ENCODE measurements at regions of chr17 and their contacts with region 1.

Region 1: GRCh38 chr17:63611354-63611753 is 10.7 kb downstream of the TACO1 start:
- DNase-seq: no peak
- H3K4me3 ChIP-seq: no peak overlapping the region
- H3K27ac ChIP-seq: peak overlapping the region; percentile 6 to 11; a peak in 2 of 4 replicates
- H3K4me1 ChIP-seq: no peaks in the 10 kb centered on the region
- H3K27me3 ChIP-seq: no peaks in the 10 kb centered on the region
- CTCF ChIP-seq: no peak
- EP300 ChIP-seq: no peak
- RAD21 ChIP-seq: no peak

Region 2: DNA sequence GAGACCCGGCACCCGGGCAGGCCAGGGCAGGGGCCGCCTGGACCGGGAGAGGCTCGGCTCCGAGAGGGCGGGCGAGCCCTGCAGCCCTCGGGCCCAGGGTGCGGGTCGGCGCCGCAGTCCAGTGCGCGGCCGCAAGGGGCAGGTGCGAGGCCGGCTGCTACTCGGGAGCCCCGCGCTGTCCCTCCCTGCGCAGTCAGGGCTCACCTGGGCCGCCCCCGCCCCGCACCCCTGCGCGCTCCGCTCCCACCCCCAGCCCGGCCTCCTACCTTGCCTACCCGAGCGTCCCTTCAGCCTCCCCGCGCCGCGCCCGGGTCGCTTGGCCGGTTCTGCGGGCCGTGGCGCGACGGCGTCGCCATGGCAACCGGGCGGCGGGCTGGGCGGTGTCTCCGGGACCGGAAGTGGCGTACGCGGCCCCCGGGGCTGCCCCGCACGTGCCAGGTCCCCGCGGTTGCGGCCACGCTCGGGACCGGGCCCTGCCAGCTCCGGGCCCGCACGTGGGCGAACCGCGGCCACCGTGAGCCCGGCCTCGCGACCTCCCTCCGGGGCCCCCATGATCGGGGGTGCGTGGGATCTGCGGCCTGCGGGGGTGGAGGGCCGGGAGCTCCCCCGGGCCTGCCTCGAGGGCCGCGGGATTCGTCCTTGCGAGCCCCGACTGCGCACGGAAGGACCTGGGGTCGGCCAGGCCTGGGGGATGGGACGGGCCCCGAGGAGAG is 165.2 kb before region 1 on chr17 and contains the start of gene CYB561:
- CTCF ChIA-PET with region 1: interaction called, 827 read pairs
- POLR2A ChIA-PET with region 1: interaction called, 13 read pairs
- DNase-seq: peak; percentile 97
- H3K4me3 ChIP-seq: peak within 1 kb of the TSS; percentile 56 to 64
- H3K27ac ChIP-seq: peak within 1 kb of the TSS; percentile 19 to 99; a peak in 2 of 4 replicates
- H3K4me1 ChIP-seq: peaks cover 8 to 69% of the 10 kb centered on the region in 2 experiments
- H3K27me3 ChIP-seq: no peaks in the 10 kb centered on the region
- CTCF ChIP-seq: peak; percentile 54
- EP300 ChIP-seq: no peak
- RAD21 ChIP-seq: peak; percentile 32
- polyA plus RNA-seq, gene CYB561: 28.3 and 38.6 TPM in 2 replicates

Region 3: GRCh38 chr17:63529711-63530556 is 81.4 kb before region 1 on chr17:
- CTCF ChIA-PET with region 1: interaction called, 29 read pairs
- POLR2A ChIA-PET with region 1: no interaction called
- DNase-seq: peak; percentile 74
- H3K4me3 ChIP-seq: no peak overlapping the region
- H3K27ac ChIP-seq: peak overlapping the region in 1 of 2 experiments; percentile 32; a peak in 1 of 4 replicates
- H3K4me1 ChIP-seq: peaks cover 0 to 29% of the 10 kb centered on the region in 2 experiments; a peak in 1 of 4 replicates
- H3K27me3 ChIP-seq: 0 out of 2 replicates have a peak, but pooled peaks cover 17% of the 10 kb centered on the region
- CTCF ChIP-seq: no peak
- EP300 ChIP-seq: no peak
- RAD21 ChIP-seq: 0 out of 2 replicates have a peak, but pooled peaks have one; percentile 9

Region 4: GRCh38 chr17:63587770-63588169 is 23.6 kb before region 1 on chr17:
- CTCF ChIA-PET with region 1: interaction called, 28 read pairs
- POLR2A ChIA-PET with region 1: interaction called, 6 read pairs
- DNase-seq: no peak
- H3K4me3 ChIP-seq: no peak overlapping the region
- H3K27ac ChIP-seq: no peak overlapping the region
- H3K4me1 ChIP-seq: no peaks in the 10 kb centered on the region
- H3K27me3 ChIP-seq: no peaks in the 10 kb centered on the region
- CTCF ChIP-seq: no peak
- EP300 ChIP-seq: no peak
- RAD21 ChIP-seq: no peak

Region 5: GRCh38 chr17:63646488-63646806 is 35.1 kb after region 1 on chr17:
- CTCF ChIA-PET with region 1: interaction called, 10 read pairs
- POLR2A ChIA-PET with region 1: no interaction called
- DNase-seq: no peak
- H3K4me3 ChIP-seq: no peak overlapping the region
- H3K27ac ChIP-seq: no peak overlapping the region
- H3K4me1 ChIP-seq: no peaks in the 10 kb centered on the region; a peak in 1 of 4 replicates
- H3K27me3 ChIP-seq: no peaks in the 10 kb centered on the region
- CTCF ChIP-seq: no peak
- EP300 ChIP-seq: no peak
- RAD21 ChIP-seq: no peak

Measured in SK-N-SH (cell line).